HepG2 (cell line): ENCODE measurements at regions of chr2 and their contacts with region 1.

Region 1: DNA sequence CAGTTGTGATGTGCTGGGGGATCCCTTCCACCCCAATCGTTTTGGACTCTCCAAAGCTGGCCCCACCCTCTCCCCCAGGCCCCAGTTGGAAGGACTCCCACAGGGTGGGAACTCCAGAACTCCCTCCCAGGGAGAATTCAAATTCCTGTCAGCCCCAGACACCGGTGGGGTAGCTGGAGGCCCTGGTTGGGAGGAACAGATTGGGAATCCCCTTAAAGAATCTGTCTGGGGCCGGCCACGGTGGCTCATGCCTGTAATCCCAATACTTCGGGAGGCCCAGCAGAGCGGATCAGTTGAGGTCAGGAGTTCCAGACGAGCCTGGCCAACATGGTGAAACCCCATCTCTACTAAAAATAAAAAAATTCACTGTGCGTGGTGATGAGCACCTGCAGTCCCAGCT is 155.5 kb downstream of the ANKRD36C start:
- DNase-seq: no peak
- ATAC-seq: no peak
- H3K4me3 ChIP-seq: no peak overlapping the region
- H3K27ac ChIP-seq: no peak overlapping the region
- H3K4me1 ChIP-seq: no peaks in the 10 kb centered on the region
- H3K27me3 ChIP-seq: no peaks in the 10 kb centered on the region
- CTCF ChIP-seq: no peak
- EP300 ChIP-seq: no peak
- POLR2A ChIP-seq: no peak
- RAD21 ChIP-seq: no peak

Region 2: GRCh38 chr2:95760806-95761530 is 75.2 kb before region 1 on chr2:
- CTCF ChIA-PET with region 1: no interaction called
- POLR2A ChIA-PET with region 1: no interaction called
- in situ Hi-C with region 1: no loop called
- intact Hi-C with region 1: no loop called
- DNase-seq: no peak
- ATAC-seq: no peak; the same call in 2 of the 3 replicates
- H3K4me3 ChIP-seq: no peak overlapping the region
- H3K27ac ChIP-seq: no peak overlapping the region
- H3K4me1 ChIP-seq: no peaks in the 10 kb centered on the region
- H3K27me3 ChIP-seq: peaks cover 8 to 9% of the 10 kb centered on the region in 2 experiments; a peak in 4 of 5 replicates
- CTCF ChIP-seq: no peak
- EP300 ChIP-seq: no peak
- POLR2A ChIP-seq: no peak
- RAD21 ChIP-seq: no peak

Region 3: DNA sequence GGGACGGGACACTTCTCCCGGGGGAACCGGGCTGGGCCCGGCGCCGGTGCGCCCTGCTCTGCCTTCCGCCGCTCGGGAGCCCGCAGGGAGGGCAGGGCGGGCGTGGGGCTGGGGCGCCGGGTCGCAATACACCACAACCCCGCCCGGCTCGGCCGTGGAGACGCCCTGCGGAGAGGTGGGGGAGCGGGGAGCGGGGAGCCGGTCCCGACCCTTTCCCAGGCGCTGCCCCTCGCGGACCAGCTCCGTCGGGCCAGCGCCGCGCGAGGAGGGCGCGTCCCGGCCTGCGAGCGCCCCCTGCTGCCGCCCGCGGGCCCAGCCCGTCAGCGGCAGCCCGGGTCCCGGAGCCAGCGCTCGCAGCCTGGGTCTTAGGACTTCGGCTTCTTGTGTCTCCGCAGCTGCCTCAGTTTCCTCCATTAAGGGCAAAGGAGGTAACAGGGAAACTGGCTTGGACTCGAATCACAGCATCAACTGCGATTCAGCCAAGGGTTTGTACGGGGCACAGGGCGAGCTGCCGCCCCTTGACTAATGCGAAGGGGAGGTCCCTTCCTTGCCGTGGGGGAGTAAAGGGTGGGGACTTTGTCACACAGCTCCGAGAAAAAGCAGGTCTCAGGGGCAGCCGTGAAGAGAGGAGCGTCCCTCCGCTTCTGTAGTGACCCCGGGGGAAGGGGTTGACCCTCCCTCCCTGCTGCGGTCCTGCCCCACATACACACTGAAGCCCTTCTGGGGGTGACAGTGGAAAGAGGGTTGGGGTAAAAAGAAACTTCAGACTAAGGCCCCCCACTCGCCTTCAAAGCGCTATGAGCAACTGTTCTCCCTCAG is 280.9 kb after region 1 on chr2:
- CTCF ChIA-PET with region 1: no interaction called
- POLR2A ChIA-PET with region 1: no interaction called
- in situ Hi-C with region 1: loop called (anchors 25 kb)
- intact Hi-C with region 1: no loop called
- DNase-seq: no peak
- ATAC-seq: peak; percentile 85
- H3K4me3 ChIP-seq: peak overlapping the region; percentile 48 to 76 (median 53); a peak in 5 of 6 replicates
- H3K27ac ChIP-seq: no peak overlapping the region
- H3K4me1 ChIP-seq: 0 out of 2 replicates have a peak, but pooled peaks cover 5% of the 10 kb centered on the region
- H3K27me3 ChIP-seq: peaks cover 26 to 71% of the 10 kb centered on the region in 2 experiments
- CTCF ChIP-seq: peak; percentile 69
- EP300 ChIP-seq: no peak
- POLR2A ChIP-seq: no peak
- RAD21 ChIP-seq: peak; percentile 100